Activated CD4-positive, alpha-beta T cell treated with anti-CD3 and anti-CD28 coated beads, Interleukin-2, amount 10 ng/mL, durations not matched to agents 24 days and 14 days (primary cell): ENCODE measurements at regions of chr19 and their contacts with region 1.

Region 1: DNA sequence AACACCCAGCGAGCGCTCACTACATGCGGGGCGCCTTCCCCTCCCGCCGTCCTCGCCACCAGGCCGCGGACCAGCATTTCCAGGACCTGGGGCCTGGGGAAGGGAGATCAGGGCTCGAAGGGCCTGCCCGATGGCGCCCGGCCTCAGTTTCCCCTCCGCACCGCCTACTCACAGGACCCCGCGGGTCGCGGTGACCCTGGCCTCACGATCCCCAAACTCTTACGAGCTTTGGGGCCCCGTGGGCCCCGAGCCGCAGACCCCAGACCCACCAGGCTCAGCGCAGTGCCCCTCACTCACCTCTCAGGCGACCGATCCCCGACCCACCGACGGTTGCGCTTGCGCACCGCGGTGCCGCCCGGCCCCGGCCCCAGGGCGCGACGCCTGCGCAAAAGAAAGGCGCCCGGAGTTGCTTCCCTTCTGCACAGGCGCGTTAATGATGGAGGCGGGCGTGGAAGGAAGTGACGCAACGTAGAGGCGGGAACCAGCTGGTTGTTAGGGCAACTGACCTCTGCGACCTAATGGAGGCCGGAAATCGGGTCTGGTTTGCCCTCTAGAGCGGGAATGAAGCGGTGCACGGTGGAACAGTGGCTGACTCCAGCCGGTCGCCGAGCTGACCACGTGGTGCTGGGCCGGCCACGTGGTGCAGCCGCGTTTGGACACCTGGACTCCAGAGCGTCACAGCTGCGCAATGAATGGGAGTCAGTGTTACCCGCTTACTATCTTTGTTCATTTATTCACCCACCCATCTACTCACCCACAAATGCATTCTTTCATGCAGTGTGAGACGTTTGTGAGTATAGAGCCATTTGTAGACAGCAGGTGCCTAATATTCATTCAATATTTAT is at the start of gene SGTA:
- DNase-seq: peak; percentile 99
- H3K4me3 Mint-ChIP-seq: peak within 1 kb of the TSS; percentile 95
- H3K27ac Mint-ChIP-seq: peak within 1 kb of the TSS; percentile 98
- H3K4me1 Mint-ChIP-seq: peaks cover 37% of the 10 kb centered on the region
- H3K27me3 Mint-ChIP-seq: no peaks in the 10 kb centered on the region
- total RNA-seq, gene SGTA: 73.3 and 76.9 TPM in 2 replicates

Region 2: GRCh38 chr19:2678043-2678671 is 105.0 kb before region 1 on chr19:
- intact Hi-C with region 1: no loop called
- DNase-seq: no peak
- H3K4me3 Mint-ChIP-seq: no peak overlapping the region
- H3K27ac Mint-ChIP-seq: no peak overlapping the region
- H3K4me1 Mint-ChIP-seq: no peaks in the 10 kb centered on the region
- H3K27me3 Mint-ChIP-seq: no peaks in the 10 kb centered on the region

Region 3: GRCh38 chr19:2739602-2740313 is 43.4 kb before region 1 on chr19 and contains the start of gene SLC39A3:
- intact Hi-C with region 1: loop called (anchors 2 kb)
- DNase-seq: peak; percentile 100
- H3K4me3 Mint-ChIP-seq: peak within 1 kb of the TSS; percentile 97
- H3K27ac Mint-ChIP-seq: peak within 1 kb of the TSS; percentile 68
- H3K4me1 Mint-ChIP-seq: peaks cover 15% of the 10 kb centered on the region
- H3K27me3 Mint-ChIP-seq: peaks cover 8% of the 10 kb centered on the region
- total RNA-seq, gene SLC39A3: 48.8 and 52.2 TPM in 2 replicates

Region 4: GRCh38 chr19:2798733-2799132 is 15.6 kb after region 1 on chr19:
- intact Hi-C with region 1: no loop called
- DNase-seq: no peak
- H3K4me3 Mint-ChIP-seq: no peak overlapping the region
- H3K27ac Mint-ChIP-seq: no peak overlapping the region
- H3K4me1 Mint-ChIP-seq: no peaks in the 10 kb centered on the region
- H3K27me3 Mint-ChIP-seq: no peaks in the 10 kb centered on the region

Region 5: GRCh38 chr19:2820112-2820702 is 37.0 kb after region 1 on chr19:
- intact Hi-C with region 1: loop called (anchors 1 kb)
- DNase-seq: peak; percentile 70
- H3K4me3 Mint-ChIP-seq: peak overlapping the region; percentile 85
- H3K27ac Mint-ChIP-seq: no peak overlapping the region
- H3K4me1 Mint-ChIP-seq: peaks cover 3% of the 10 kb centered on the region
- H3K27me3 Mint-ChIP-seq: no peaks in the 10 kb centered on the region